ENCODE measurements at regions of chr21 and their contacts with region 1.

Region 1: DNA sequence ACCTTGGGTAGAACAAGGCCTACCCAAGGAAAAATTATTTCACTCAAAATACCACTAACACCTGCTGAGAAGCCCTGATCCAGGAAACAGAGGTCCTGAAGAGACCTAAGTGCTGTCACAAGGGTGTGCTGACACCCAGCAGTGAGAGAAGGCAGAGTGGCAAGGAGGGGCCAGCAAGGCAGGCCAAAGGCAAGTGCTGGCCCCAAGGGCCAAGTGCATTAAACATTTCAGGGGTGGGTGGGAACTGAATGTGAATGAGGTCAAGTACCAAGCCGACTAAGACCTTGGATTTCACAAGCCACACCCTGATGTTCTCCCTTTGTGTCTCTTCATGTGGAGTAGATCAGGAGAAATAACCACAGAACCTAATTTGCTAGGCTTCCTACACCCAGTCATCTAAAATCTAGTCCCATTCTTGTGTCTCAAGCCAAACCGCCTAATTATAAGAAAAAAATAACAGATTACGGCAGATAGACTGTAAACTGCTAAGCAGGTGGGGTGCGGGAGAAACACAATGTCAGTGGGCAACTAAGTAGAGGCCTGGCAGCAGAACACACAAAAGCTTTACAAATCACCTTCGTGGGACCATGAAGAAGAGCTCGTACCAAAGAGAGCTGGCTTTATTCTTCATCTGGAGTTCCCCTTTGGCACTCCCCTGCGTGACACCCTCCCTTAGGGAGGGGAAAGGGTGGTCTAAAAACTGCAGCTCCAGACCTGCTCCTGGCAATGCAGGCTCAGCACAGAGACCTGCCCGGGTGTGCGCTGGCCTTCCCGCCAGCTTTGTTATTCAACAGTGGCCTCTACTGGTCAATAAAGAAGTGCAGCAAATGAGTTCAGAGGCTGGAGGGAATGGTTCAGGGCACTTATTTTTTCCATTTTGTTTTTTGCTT is 8.7 kb downstream of the UBE2G2 start:
- DNase-seq: peak; percentile 75 to 87 (median 81)
- ATAC-seq: peak; percentile 97
- H3K4me3 ChIP-seq: no peak overlapping the region
- H3K27ac ChIP-seq: no peak overlapping the region; the same call in 2 of the 3 replicates
- H3K4me1 ChIP-seq: peaks cover 2 to 13% of the 10 kb centered on the region in 2 experiments; a peak in 4 of 5 replicates
- H3K27me3 ChIP-seq: no peaks in the 10 kb centered on the region
- CTCF ChIP-seq: peak; percentile 70 to 91 (median 90)
- EP300 ChIP-seq: no peak
- POLR2A ChIP-seq: no peak
- RAD21 ChIP-seq: peak; percentile 83 to 85

Region 2: GRCh38 chr21:44517175-44517899 is 275.6 kb before region 1 on chr21:
- CTCF ChIA-PET with region 1: no interaction called
- POLR2A ChIA-PET with region 1: no interaction called
- in situ Hi-C with region 1: loop called (anchors 5 kb)
- intact Hi-C with region 1: no loop called
- DNase-seq: peak; percentile 89 to 96 (median 92)
- ATAC-seq: peak; percentile 98
- H3K4me3 ChIP-seq: peak overlapping the region; percentile 35
- H3K27ac ChIP-seq: peak overlapping the region; percentile 19; the same call in 2 of the 3 replicates
- H3K4me1 ChIP-seq: peaks cover 0 to 36% of the 10 kb centered on the region in 2 experiments; a peak in 3 of 5 replicates
- H3K27me3 ChIP-seq: peaks cover 0 to 23% of the 10 kb centered on the region in 2 experiments; a peak in 1 of 5 replicates
- CTCF ChIP-seq: no peak
- EP300 ChIP-seq: no peak
- POLR2A ChIP-seq: peak; percentile 60; the same call in 1 of the 2 replicates
- RAD21 ChIP-seq: no peak

Region 3: GRCh38 chr21:44817506-44817880 is 24.5 kb after region 1 on chr21:
- CTCF ChIA-PET with region 1: no interaction called
- POLR2A ChIA-PET with region 1: no interaction called
- in situ Hi-C with region 1: no loop called
- intact Hi-C with region 1: no loop called
- DNase-seq: peak; percentile 96 to 99 (median 98)
- ATAC-seq: peak; percentile 96
- H3K4me3 ChIP-seq: peak overlapping the region; percentile 71
- H3K27ac ChIP-seq: peak overlapping the region; percentile 99; the same call in 2 of the 3 replicates
- H3K4me1 ChIP-seq: peaks cover 0 to 56% of the 10 kb centered on the region in 2 experiments; a peak in 4 of 5 replicates
- H3K27me3 ChIP-seq: no peaks in the 10 kb centered on the region
- CTCF ChIP-seq: peak in 2 of 3 experiments; percentile 13 to 16; a peak in 1 of 6 replicates
- EP300 ChIP-seq: no peak
- POLR2A ChIP-seq: no peak
- RAD21 ChIP-seq: peak in 1 of 2 experiments; percentile 20; a peak in 1 of 4 replicates